ENCODE measurements at regions of chr11 and their contacts with region 1.

Region 1: DNA sequence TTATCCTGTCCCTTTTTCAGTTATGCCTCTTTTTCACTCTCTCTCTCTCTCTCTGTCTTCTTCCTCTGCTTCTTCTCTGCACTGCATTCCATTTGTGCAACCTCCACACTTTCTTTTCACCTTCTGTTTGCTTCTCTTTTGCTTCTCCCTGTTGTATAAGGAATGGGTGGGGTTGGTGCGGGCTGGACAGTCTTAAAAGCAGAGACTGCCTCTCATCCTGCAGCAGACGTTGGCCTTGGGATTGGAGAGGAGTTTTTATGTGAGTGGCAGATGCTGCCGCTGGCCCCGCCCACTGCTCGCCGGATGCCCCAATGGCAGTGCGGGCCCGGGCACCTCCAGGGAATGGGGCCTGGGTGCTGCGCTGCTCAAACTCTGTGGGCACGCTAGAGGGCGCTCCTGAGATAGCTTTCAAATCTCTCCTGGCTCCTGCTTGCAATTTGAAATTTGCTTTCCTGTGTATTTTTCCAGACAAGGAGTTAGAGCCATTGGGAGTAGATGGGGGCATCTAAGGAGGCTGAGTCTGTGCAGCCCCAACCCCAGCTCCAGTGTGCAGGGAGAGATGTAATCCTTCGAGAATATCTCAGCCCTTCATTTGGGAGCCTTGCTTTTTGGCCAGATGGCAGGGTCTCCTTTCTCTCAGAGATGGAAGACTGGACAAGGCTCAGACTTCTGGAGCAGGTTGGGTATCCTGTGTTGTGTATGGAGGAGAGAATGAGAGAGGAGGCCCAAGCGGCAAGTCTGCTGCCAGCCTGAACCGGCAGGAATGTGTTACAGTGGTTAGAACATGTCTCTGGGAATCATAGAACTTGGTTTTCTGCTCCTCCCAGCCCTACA is 81.2 kb downstream of the GRAMD1B start:
- DNase-seq: peak; percentile 92
- H3K4me3 ChIP-seq: peak overlapping the region in 1 of 2 experiments; percentile 23; a peak in 2 of 4 replicates
- H3K27ac ChIP-seq: peak overlapping the region; percentile 44 to 68; a peak in 3 of 4 replicates
- H3K4me1 ChIP-seq: peaks cover 13 to 27% of the 10 kb centered on the region in 2 experiments; a peak in 3 of 4 replicates
- H3K27me3 ChIP-seq: no peaks in the 10 kb centered on the region
- CTCF ChIP-seq: peak; percentile 97
- EP300 ChIP-seq: no peak
- RAD21 ChIP-seq: peak; percentile 90

Region 2: DNA sequence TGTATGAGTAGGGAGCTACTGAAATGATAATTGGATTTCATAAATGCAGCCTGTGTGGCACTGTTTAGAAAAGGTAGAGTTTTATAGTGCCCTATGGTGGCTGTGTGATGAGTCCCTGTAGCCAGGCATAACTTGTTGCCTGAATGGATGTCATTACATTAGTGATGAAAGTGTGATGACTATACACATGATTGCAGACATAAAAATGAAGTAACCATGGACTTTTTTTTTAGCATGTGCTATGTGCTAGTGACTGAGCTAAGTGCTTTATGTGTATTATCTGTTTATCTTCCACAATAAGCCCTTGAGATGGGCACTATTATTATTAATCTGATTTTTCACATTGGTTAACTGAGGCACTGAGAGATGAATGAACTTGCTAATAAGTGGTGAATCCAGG is 94.7 kb before region 1 on chr11:
- CTCF ChIA-PET with region 1: no interaction called
- POLR2A ChIA-PET with region 1: no interaction called
- DNase-seq: no peak
- H3K4me3 ChIP-seq: no peak overlapping the region
- H3K27ac ChIP-seq: no peak overlapping the region
- H3K4me1 ChIP-seq: no peaks in the 10 kb centered on the region
- H3K27me3 ChIP-seq: no peaks in the 10 kb centered on the region
- CTCF ChIP-seq: no peak
- EP300 ChIP-seq: no peak
- RAD21 ChIP-seq: no peak

Region 3: DNA sequence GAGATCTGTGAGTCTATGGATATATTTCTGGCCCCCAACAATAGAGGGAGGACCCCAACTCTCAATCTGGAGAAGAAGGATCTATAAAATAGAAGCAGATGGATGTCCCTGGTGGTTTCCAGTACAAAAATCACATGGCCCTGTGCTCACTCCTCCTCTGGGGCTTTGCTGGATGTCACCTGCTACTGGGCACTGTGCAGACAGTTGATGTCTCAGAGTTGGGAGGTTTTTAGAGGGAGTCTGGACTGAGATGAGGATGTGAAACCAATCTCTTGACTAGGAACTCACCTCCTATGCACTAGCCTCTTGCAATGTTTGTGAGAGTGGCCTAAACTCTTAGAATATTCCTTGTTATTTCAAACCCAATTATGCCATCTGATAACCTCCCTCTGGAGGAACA is 35.9 kb after region 1 on chr11:
- CTCF ChIA-PET with region 1: interaction called, 24 read pairs
- POLR2A ChIA-PET with region 1: interaction called, 3 read pairs
- DNase-seq: no peak
- H3K4me3 ChIP-seq: no peak overlapping the region
- H3K27ac ChIP-seq: peak overlapping the region in 1 of 2 experiments; percentile 34; a peak in 1 of 4 replicates
- H3K4me1 ChIP-seq: peaks cover 23 to 30% of the 10 kb centered on the region in 2 experiments; a peak in 3 of 4 replicates
- H3K27me3 ChIP-seq: no peaks in the 10 kb centered on the region
- CTCF ChIP-seq: no peak
- EP300 ChIP-seq: no peak
- RAD21 ChIP-seq: no peak

Region 4: DNA sequence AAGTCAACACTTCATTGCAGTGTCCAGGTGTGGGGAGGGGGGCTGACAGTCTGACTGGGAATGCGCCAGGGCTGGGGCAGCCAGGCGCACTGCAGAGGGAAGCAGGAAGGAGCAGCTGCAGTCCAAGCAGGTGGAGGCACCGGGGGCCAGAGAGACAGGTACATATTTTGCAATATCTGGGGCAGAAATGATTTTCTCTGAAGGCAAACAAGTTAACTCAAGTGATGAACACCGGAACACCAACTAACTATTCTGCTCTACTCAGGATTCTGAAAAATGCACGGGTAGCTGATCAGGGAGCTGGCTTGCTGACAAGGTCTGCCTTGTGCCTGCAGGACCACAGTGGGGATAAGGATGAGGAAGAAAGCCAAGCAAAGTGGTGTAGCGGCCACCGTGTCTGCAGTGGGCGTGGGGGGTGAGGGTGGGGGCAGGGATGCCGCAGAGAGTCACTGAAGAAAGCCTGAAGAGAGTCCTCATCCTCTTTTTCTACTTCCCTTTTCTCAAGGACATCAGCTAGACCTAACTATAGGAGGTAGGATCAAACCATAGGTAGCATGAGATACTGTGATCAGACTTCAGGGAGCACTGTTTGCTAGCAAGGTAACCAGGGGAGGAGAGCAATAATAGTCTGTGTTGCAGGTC is 59.8 kb after region 1 on chr11:
- CTCF ChIA-PET with region 1: interaction called, 50 read pairs
- POLR2A ChIA-PET with region 1: interaction called, 4 read pairs
- DNase-seq: no peak
- H3K4me3 ChIP-seq: no peak overlapping the region
- H3K27ac ChIP-seq: no peak overlapping the region
- H3K4me1 ChIP-seq: no peaks in the 10 kb centered on the region; a peak in 1 of 4 replicates
- H3K27me3 ChIP-seq: no peaks in the 10 kb centered on the region
- CTCF ChIP-seq: no peak
- EP300 ChIP-seq: no peak
- RAD21 ChIP-seq: no peak

Region 5: GRCh38 chr11:123616505-123617198 is 105.4 kb after region 1 on chr11:
- CTCF ChIA-PET with region 1: no interaction called
- POLR2A ChIA-PET with region 1: no interaction called
- DNase-seq: peak; percentile 67
- H3K4me3 ChIP-seq: no peak overlapping the region
- H3K27ac ChIP-seq: peak overlapping the region; percentile 27 to 65; a peak in 3 of 4 replicates
- H3K4me1 ChIP-seq: peaks cover 3 to 8% of the 10 kb centered on the region in 2 experiments; a peak in 1 of 4 replicates
- H3K27me3 ChIP-seq: no peaks in the 10 kb centered on the region
- CTCF ChIP-seq: no peak
- EP300 ChIP-seq: peak in 1 of 2 experiments; percentile 43; a peak in 1 of 4 replicates
- RAD21 ChIP-seq: no peak

Measured in SK-N-SH (cell line).